ENCODE measurements at regions of chr11 and their contacts with region 1.

Region 1: GRCh38 chr11:1852877-1853276 is at the start of gene LSP1:
- DNase-seq: peak; percentile 90
- H3K4me3 Mint-ChIP-seq: peak within 1 kb of the TSS; percentile 84
- H3K27ac Mint-ChIP-seq: peak within 1 kb of the TSS; percentile 93
- H3K4me1 Mint-ChIP-seq: peaks cover 77% of the 10 kb centered on the region
- H3K27me3 Mint-ChIP-seq: no peaks in the 10 kb centered on the region
- total RNA-seq, gene LSP1: 42.4 to 42.9 TPM

Region 2: DNA sequence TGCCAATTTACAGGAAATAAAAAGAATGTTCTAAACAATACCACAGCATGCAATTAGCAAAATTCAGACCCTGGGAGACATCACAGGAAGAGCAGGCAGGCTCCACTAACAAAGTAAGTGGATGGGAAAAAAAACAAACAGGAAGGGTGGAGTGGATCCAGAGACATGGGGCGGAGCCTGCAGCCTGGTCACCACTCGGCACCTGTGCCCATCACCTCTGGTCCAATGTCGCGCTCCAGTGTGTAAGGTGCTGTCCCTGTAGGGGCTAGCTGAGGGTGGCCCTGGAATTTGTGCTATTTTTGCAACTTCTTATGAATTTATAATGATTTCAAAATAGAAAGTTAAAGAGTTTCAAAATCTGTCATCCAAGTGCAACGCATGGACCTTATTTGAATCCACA is 355.3 kb before region 1 on chr11:
- CTCF ChIA-PET with region 1: no interaction called
- intact Hi-C with region 1: no loop called
- DNase-seq: no peak
- H3K4me3 Mint-ChIP-seq: no peak overlapping the region
- H3K27ac Mint-ChIP-seq: no peak overlapping the region
- H3K4me1 Mint-ChIP-seq: peaks cover 55% of the 10 kb centered on the region
- H3K27me3 Mint-ChIP-seq: no peaks in the 10 kb centered on the region

Region 3: DNA sequence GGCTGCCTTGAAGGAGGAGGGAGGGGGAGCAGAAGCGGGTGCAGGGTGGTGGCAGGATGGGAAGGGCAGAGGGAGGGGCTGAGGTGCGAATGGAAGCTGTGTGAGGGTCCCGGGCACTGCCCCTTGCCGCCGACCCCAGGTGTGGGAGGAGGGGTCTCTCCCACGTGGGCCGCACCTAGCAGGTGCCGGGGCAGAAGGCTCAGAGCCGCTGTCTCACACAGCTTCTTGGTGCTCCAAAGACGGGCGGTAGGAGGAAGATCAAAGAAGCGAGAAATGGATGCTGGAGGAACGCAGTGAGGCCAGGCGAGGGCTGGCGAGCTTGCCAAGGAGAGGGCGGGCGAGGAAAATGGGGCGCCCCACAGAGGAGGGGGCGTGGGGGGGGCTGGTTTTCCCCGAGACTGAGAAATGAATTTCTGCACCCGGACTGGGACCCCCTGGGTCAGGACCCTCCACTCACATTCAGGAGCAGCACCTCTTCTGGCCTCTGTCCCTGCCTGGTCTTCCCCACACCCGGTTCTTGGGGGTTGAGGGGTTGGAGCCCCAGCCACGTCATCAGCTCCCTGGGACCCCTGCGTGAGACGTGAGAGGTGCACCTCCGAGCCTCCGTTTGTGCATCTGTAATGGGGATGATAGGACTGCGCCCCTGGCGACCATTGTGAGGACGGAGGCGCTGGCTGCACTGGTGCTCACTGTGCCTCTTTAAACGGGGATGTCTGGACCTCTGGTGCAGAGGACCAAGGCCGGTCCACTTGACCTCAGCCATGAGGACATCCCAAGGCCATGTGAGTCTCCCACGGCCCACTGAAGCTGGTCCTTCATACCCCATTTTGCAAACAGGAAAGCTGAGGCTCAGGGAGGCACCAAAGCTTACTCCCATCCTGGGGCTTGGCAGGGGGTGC is 16.8 kb after region 1 on chr11:
- CTCF ChIA-PET with region 1: interaction called, 7 read pairs
- intact Hi-C with region 1: loop called (anchors 2 kb)
- DNase-seq: no peak
- H3K4me3 Mint-ChIP-seq: no peak overlapping the region
- H3K27ac Mint-ChIP-seq: no peak overlapping the region
- H3K4me1 Mint-ChIP-seq: peaks cover 57% of the 10 kb centered on the region
- H3K27me3 Mint-ChIP-seq: no peaks in the 10 kb centered on the region

Region 4: DNA sequence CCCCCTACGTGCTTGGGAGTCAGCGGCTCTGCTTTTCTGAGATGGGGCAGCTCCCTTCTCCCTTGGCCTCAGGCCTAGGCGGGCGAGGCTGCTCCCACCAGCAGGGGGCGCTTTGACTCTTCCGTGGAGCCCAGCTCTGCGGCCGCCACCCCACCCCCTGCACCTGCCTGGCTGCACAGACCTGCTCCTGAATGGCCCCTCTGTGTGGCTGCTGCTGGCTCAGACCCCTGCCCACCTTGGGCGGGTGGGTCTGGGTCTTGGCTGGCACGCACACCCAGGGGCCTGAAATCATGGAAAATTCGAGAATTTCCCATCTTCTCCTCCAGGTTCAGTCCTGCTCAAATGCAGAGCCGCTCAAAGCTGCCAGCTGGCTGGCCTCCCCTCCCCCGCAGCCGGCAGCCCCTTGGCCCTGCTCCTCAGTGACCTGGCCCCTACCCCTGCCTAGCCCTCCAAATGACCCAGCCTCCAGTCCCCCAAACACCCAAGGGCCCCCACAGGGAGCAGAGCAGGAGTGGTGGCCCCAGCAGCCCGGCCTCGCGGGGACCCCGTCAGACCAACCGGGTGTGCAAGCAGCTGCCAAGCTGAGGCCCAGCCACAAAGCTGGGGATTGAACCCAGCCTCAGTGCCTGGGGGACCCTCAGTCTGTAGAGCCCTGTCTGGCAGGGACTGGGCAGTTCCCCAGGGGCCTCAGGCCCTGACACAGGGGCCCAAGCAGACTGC is 29.8 kb after region 1 on chr11:
- CTCF ChIA-PET with region 1: interaction called, 42 read pairs
- intact Hi-C with region 1: no loop called
- DNase-seq: peak; percentile 85
- H3K4me3 Mint-ChIP-seq: no peak overlapping the region
- H3K27ac Mint-ChIP-seq: no peak overlapping the region
- H3K4me1 Mint-ChIP-seq: peaks cover 3% of the 10 kb centered on the region
- H3K27me3 Mint-ChIP-seq: no peaks in the 10 kb centered on the region

Region 5: GRCh38 chr11:1889224-1890120 is 36.6 kb after region 1 on chr11:
- CTCF ChIA-PET with region 1: interaction called, 4 read pairs
- intact Hi-C with region 1: loop called (anchors 2 kb)
- DNase-seq: peak; percentile 84
- H3K4me3 Mint-ChIP-seq: peak overlapping the region; percentile 79
- H3K27ac Mint-ChIP-seq: peak overlapping the region; percentile 71
- H3K4me1 Mint-ChIP-seq: peaks cover 23% of the 10 kb centered on the region
- H3K27me3 Mint-ChIP-seq: no peaks in the 10 kb centered on the region

Region 6: DNA sequence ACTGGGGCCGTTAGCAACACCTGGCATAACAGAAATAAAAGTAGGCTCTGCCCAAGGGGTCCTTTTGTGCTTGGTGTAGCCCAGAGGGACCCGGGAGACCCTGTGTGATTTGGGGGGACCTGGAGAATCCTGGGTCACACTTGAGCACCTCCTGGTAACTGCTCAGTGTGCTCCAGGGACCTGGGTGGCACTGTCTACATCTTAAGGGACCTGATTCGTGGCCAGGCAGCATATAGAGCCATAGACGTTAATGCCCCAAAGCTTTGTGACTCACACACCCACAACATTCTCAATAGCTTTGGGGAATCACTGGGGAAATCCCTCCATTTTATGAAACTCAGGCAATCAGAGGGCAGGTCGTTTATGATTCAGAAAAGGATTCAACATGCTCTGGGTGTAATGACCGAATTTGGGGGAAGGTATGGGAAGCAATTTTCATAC is 289.9 kb after region 1 on chr11:
- CTCF ChIA-PET with region 1: no interaction called
- intact Hi-C with region 1: loop called (anchors 1 kb)
- DNase-seq: peak; percentile 75
- H3K4me3 Mint-ChIP-seq: peak overlapping the region; percentile 49
- H3K27ac Mint-ChIP-seq: peak overlapping the region; percentile 63
- H3K4me1 Mint-ChIP-seq: peaks cover 34% of the 10 kb centered on the region
- H3K27me3 Mint-ChIP-seq: peaks cover 56% of the 10 kb centered on the region

Region 7: GRCh38 chr11:2269601-2270321 is 416.9 kb after region 1 on chr11:
- CTCF ChIA-PET with region 1: no interaction called
- intact Hi-C with region 1: loop called (anchors 5 kb)
- DNase-seq: peak; percentile 51
- H3K4me3 Mint-ChIP-seq: peak overlapping the region; percentile 36
- H3K27ac Mint-ChIP-seq: no peak overlapping the region
- H3K4me1 Mint-ChIP-seq: peaks cover 25% of the 10 kb centered on the region
- H3K27me3 Mint-ChIP-seq: peaks cover 25% of the 10 kb centered on the region

Measured in activated naive CD4-positive, alpha-beta T cell treated with anti-CD3 and anti-CD28 coated beads for 36 hours (primary cell).